HEK293 (cell line): ENCODE measurements at regions of chr1 and their contacts with region 1.

Region 1: DNA sequence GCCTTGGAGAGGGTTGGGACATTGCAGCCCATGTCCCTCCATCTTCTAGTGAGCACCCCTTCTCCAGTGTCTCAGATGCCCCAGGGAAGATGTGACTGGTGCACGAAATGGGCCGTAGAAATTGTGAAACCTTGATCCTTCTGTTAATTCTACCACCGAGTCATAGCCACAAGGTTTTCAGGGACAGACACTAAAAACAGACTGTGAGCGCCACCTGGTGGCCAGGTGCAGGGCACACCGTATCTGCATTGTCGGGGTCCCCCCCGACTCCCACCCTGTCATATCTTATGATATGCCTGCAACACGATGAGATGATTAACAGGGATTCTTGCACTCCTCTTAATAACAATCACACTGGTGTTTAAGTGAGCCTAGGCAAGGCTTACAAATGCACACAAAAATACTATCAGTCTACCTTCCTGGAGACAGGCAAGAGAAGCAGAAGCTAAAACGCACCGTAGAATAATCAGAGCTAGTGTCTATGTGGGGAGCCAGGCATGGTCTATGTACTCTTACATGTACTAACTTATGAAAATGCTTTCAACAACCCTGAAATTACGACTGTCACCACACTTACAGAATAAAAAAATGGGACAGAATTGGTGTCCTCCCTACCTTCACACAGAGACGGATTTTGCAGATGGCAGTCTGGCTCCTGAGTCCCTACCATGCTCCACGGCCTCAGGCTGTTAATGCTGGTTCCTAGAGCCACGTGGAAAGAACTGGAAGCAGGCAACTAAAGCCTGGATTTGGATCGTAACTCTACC is 57.9 kb downstream of the FHAD1 start:
- H3K4me3 ChIP-seq: no peak overlapping the region
- H3K27ac ChIP-seq: no peak overlapping the region
- H3K4me1 ChIP-seq: no peaks in the 10 kb centered on the region
- CTCF ChIP-seq: peak; percentile 67

Region 2: DNA sequence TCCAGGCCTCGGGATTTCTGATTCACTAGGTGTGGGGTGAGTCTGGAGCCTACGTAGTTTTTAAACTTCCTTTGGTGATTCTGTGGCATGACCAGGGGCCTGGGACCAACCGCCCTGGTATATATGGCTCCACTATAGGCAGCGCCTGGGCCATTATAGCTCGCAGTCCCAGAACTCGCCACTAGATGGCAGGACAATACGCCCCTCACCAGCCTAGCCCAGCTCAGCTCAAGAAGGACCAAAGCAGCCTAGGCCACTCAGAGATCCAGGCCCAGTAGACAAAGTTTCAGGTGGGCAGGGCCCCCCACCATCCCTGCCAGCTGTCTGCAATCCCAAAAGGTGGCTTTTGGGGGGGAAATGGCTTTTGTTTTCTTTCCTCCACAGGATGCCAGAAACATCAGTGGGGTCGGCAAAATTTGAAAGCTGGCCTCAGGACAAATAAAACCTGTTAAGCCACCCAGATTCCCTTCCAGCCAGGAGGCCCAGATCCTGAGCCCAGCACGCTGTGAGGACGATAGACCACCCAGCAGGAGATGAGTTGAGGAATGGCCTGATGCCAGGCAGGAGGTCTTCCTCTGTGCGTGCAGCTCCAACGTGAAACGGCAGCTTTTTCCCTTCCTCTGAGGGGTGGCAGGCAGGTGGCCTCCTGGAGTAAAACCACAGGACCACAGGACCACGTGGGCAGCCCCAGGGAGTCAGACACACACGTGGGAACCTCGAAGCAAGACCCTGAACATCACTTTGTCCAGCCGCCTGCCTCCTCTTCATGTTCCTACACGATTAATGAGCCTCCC is 176.2 kb before region 1 on chr1:
- CTCF ChIA-PET with region 1: interaction called, 52 read pairs
- POLR2A ChIA-PET with region 1: no interaction called
- H3K4me3 ChIP-seq: no peak overlapping the region
- H3K27ac ChIP-seq: no peak overlapping the region
- H3K4me1 ChIP-seq: no peaks in the 10 kb centered on the region
- CTCF ChIP-seq: 0 out of 2 replicates have a peak, but pooled peaks have one; percentile 33

Region 3: DNA sequence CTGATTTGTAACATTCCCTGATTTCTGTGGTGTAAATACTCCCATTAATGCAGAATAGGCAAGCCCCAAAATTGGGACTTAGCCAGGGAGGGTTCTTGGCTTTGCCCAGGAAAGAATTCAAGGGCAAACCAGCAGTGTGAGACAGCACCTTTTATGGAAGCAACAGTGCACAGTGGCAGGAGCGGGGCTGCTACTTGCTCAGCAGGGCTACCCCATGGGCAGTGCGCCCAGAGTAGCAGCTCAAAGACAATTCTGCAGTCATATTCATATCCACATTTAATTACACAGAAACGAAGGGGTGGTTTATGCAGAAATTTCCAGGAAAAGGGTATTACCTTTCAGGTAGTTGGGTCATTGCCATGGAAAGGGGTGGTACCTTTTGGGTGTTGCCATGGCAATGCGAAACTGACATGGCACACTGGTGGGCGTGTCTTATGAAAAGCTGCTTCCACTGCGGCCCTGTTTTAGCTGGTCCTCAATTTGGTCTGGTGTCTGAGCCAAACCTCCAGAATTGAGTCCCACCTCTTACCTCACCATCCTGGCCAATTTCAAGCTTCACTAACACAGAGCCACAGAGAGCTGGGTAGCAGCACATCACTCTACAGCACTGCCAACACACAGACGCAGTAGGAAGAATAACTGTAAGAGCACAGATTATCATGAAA is 21.9 kb before region 1 on chr1:
- CTCF ChIA-PET with region 1: interaction called, 17 read pairs
- POLR2A ChIA-PET with region 1: no interaction called
- H3K4me3 ChIP-seq: no peak overlapping the region
- H3K27ac ChIP-seq: no peak overlapping the region
- H3K4me1 ChIP-seq: 0 out of 2 replicates have a peak, but pooled peaks cover 6% of the 10 kb centered on the region
- CTCF ChIP-seq: no peak

Region 4: DNA sequence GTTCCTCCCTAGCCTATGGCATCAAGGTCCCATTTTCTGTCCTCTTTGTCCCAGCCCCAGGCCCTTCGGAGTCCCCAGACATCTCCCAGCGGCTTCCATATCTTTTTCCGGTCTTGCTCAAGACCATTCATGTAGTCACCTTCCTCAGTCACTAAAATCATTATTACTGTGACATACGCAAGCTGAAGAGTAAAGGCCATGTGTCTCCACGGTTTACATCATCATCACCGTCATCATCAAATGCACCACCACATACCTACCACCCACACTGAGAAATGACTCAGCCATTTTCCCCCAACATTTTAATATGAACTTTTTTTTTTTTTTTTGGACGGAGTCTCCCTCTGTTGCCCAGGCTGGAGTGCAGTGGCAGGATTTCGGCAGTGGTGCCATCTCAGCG is 14.5 kb before region 1 on chr1:
- CTCF ChIA-PET with region 1: interaction called, 17 read pairs
- POLR2A ChIA-PET with region 1: no interaction called
- H3K4me3 ChIP-seq: no peak overlapping the region
- H3K27ac ChIP-seq: no peak overlapping the region
- H3K4me1 ChIP-seq: no peaks in the 10 kb centered on the region
- CTCF ChIP-seq: no peak

Region 5: DNA sequence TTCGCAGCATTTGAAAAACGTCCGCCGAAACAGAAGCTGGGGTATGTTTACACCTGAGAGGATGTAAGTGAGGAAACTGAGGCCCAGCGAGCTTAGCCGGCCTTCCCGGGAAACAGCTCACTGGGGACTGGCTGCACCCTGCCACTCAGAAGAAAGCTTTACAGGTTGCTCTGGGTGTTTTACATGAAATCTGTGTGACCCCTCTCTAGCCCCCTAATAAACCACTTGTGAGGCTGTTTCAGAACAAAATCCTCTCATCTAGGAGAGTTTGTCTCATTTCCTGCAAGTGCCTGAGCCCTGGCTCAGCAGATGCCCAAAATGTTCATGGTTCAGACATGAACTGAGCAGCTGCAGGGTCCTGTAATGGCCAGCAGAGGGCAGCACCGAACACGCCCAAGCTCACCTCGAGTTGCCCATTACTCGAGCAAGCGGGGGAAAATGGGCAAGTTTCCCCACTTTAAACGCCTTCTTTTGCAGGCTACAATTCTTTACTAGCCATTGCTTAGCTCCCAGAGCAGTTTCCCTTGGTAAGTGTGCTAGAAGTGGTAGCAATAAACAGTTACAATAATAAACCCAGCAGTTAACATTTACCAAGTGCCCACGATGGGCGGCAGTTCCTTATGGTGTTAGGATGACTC is 18.6 kb after region 1 on chr1:
- CTCF ChIA-PET with region 1: interaction called, 11 read pairs
- POLR2A ChIA-PET with region 1: no interaction called
- H3K4me3 ChIP-seq: no peak overlapping the region
- H3K27ac ChIP-seq: no peak overlapping the region
- H3K4me1 ChIP-seq: peaks cover 6% of the 10 kb centered on the region
- CTCF ChIP-seq: peak; percentile 82

Region 6: DNA sequence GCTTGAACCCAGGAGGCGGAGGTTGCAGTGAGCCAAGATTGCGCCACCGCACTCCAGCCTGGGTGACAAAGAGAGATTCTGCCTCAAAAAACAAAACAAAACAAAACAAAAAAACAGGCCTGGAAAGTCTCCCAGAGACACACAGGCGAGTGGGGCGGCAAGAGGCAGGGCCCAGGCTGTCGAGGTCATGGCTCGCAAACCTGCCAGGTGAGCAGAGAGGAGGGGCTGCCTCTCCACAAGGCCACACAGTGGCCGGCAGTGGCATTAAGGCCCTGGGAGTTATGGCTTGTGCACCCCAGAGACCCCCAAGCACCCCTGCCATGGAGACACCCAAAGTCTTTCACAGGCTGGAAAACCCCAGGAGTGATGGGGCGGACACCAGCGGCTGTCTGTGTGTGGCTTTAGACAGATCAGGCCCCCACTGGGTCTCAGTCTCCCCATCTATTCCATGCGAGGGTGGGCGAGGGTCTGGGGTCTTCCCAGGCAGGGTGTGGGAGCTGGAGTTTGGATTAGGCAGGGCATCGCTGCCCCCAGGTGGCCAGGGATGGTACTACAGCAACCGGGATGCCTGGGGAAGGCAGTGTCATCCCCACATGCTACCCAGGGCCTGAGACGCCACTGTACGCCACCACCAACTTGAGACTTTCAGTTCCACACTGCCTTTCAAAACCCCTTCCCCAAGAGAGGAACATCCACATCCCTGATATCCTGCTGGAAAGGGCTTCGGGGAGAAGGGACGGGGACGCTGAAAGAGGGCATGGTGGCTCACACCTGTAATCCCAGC is 126.1 kb after region 1 on chr1:
- CTCF ChIA-PET with region 1: interaction called, 11 read pairs
- POLR2A ChIA-PET with region 1: no interaction called
- H3K4me3 ChIP-seq: no peak overlapping the region
- H3K27ac ChIP-seq: no peak overlapping the region
- H3K4me1 ChIP-seq: no peaks in the 10 kb centered on the region
- CTCF ChIP-seq: peak; percentile 84